ENCODE measurements at regions of chr12 and their contacts with region 1.

Region 1: GRCh38 chr12:67355578-67356379 is 86.6 kb downstream of the CAND1 start:
- DNase-seq: peak; percentile 37 to 55 (median 52)
- H3K4me3 ChIP-seq: no peak overlapping the region
- H3K4me3 Mint-ChIP-seq: peak overlapping the region in 4 of 8 donors; percentile 39 to 63 (median 48)
- H3K27ac ChIP-seq: no peak overlapping the region
- H3K27ac Mint-ChIP-seq: peak overlapping the region in 2 of 7 donors; percentile 3 to 27
- H3K4me1 ChIP-seq: peaks cover 12% of the 10 kb centered on the region
- H3K4me1 Mint-ChIP-seq: peaks cover 7 to 16% (median 10%) of the 10 kb centered on the region in 4 donors
- H3K27me3 ChIP-seq: no peaks in the 10 kb centered on the region
- H3K27me3 Mint-ChIP-seq: no peaks in the 10 kb centered on the region

Region 2: DNA sequence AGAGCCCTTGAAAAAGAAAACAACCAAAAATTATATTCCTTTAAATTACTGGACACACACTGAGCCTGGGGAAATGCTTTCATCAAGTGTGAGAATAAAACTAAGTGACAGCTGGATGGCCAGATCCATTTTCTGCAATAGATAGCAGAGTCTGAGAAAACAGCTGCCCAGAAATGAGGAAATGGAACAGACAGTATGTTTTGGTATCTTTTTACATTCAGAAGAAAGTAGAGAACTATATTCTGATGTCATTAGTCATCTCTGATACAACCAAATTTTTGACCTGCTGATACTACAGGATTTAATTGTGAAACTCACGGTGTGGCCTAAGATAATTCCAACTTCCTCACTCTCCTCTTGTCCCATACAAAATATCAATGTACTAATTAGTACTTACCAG is 1453.3 kb before region 1 on chr12:
- CTCF ChIA-PET with region 1: no interaction called
- POLR2A ChIA-PET with region 1: no interaction called
- intact Hi-C with region 1: no loop called
- DNase-seq: no peak
- H3K4me3 ChIP-seq: no peak overlapping the region
- H3K4me3 Mint-ChIP-seq: no peak overlapping the region
- H3K27ac ChIP-seq: no peak overlapping the region
- H3K27ac Mint-ChIP-seq: no peak overlapping the region
- H3K4me1 ChIP-seq: no peaks in the 10 kb centered on the region
- H3K4me1 Mint-ChIP-seq: no peaks in the 10 kb centered on the region
- H3K27me3 ChIP-seq: no peaks in the 10 kb centered on the region
- H3K27me3 Mint-ChIP-seq: peaks cover 7 to 16% of the 10 kb centered on the region in 2 donors

Region 3: GRCh38 chr12:67002720-67003119 is 353.1 kb before region 1 on chr12:
- CTCF ChIA-PET with region 1: no interaction called
- POLR2A ChIA-PET with region 1: no interaction called
- intact Hi-C with region 1: no loop called
- DNase-seq: no peak
- H3K4me3 ChIP-seq: no peak overlapping the region
- H3K4me3 Mint-ChIP-seq: no peak overlapping the region
- H3K27ac ChIP-seq: no peak overlapping the region
- H3K27ac Mint-ChIP-seq: no peak overlapping the region
- H3K4me1 ChIP-seq: no peaks in the 10 kb centered on the region
- H3K4me1 Mint-ChIP-seq: no peaks in the 10 kb centered on the region
- H3K27me3 ChIP-seq: no peaks in the 10 kb centered on the region
- H3K27me3 Mint-ChIP-seq: peaks cover 1 to 3% of the 10 kb centered on the region in 2 donors

Region 4: GRCh38 chr12:67222302-67222701 is 133.5 kb before region 1 on chr12:
- CTCF ChIA-PET with region 1: no interaction called
- POLR2A ChIA-PET with region 1: no interaction called
- intact Hi-C with region 1: no loop called
- DNase-seq: no peak
- H3K4me3 ChIP-seq: no peak overlapping the region
- H3K4me3 Mint-ChIP-seq: no peak overlapping the region
- H3K27ac ChIP-seq: no peak overlapping the region
- H3K27ac Mint-ChIP-seq: no peak overlapping the region
- H3K4me1 ChIP-seq: no peaks in the 10 kb centered on the region
- H3K4me1 Mint-ChIP-seq: no peaks in the 10 kb centered on the region
- H3K27me3 ChIP-seq: no peaks in the 10 kb centered on the region
- H3K27me3 Mint-ChIP-seq: peaks cover 0 to 3% of the 10 kb centered on the region in 2 donors

Region 5: GRCh38 chr12:67268896-67269631 is 86.7 kb before region 1 on chr12 and contains the start of gene CAND1:
- CTCF ChIA-PET with region 1: no interaction called
- POLR2A ChIA-PET with region 1: no interaction called
- intact Hi-C with region 1: no loop called
- DNase-seq: peak; percentile 98 to 99 (median 99)
- H3K4me3 ChIP-seq: peak within 1 kb of the TSS; percentile 81 to 84
- H3K4me3 Mint-ChIP-seq: peak within 1 kb of the TSS; percentile 92 to 99 (median 98)
- H3K27ac ChIP-seq: peak within 1 kb of the TSS; percentile 97
- H3K27ac Mint-ChIP-seq: peak within 1 kb of the TSS; percentile 95 to 100 (median 99)
- H3K4me1 ChIP-seq: peaks cover 45% of the 10 kb centered on the region
- H3K4me1 Mint-ChIP-seq: peaks cover 28 to 52% (median 39%) of the 10 kb centered on the region in 4 donors
- H3K27me3 ChIP-seq: no peaks in the 10 kb centered on the region
- H3K27me3 Mint-ChIP-seq: no peaks in the 10 kb centered on the region
- total RNA-seq, gene CAND1: 124 TPM

Region 6: DNA sequence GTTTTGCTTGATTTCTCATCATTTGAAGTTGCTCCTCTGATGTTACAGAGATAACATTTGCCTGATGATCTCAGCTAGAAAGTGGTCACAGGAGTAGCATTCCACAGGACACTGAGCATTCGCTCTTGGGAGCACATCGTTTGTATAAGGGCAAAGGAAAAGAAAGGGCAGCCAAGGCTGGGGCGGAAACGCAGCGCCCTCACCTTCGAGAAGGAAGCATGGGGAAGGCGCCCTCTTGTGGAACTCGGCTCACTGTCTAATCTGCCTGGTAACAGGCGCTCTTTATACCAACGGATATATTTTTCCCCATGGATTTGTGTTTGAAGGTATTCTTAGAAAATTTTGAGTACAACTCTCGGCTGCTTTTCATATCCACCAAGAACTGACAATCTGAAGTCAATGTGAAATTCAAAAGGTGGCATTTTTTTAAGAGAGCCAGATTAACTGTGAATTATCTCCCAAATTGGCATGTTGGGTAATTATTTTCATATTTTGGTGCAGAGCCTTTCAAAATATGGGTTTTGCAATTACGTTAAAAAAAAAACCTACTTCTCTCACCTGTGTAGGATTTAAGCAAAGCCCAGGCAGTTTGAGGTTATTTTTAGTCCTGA is 86.1 kb after region 1 on chr12:
- CTCF ChIA-PET with region 1: interaction called, 13 read pairs
- POLR2A ChIA-PET with region 1: interaction called, 3 read pairs
- intact Hi-C with region 1: loop called (anchors 2 kb)
- DNase-seq: peak; percentile 68 to 79 (median 68)
- H3K4me3 ChIP-seq: no peak overlapping the region
- H3K4me3 Mint-ChIP-seq: peak overlapping the region; percentile 43 to 72 (median 68)
- H3K27ac ChIP-seq: no peak overlapping the region
- H3K27ac Mint-ChIP-seq: peak overlapping the region in 6 of 7 donors; percentile 10 to 86 (median 82)
- H3K4me1 ChIP-seq: peaks cover 12% of the 10 kb centered on the region
- H3K4me1 Mint-ChIP-seq: peaks cover 21 to 35% (median 27%) of the 10 kb centered on the region in 4 donors
- H3K27me3 ChIP-seq: no peaks in the 10 kb centered on the region
- H3K27me3 Mint-ChIP-seq: no peaks in the 10 kb centered on the region

Region 7: GRCh38 chr12:67630373-67631088 is 274.8 kb after region 1 on chr12:
- CTCF ChIA-PET with region 1: interaction called, 15 read pairs
- POLR2A ChIA-PET with region 1: interaction called, 4 read pairs
- intact Hi-C with region 1: no loop called
- DNase-seq: peak; percentile 91 to 96 (median 92)
- H3K4me3 ChIP-seq: no peak overlapping the region
- H3K4me3 Mint-ChIP-seq: peak overlapping the region; percentile 61 to 88 (median 74)
- H3K27ac ChIP-seq: peak overlapping the region; percentile 43
- H3K27ac Mint-ChIP-seq: peak overlapping the region; percentile 87 to 96 (median 91)
- H3K4me1 ChIP-seq: peaks cover 84% of the 10 kb centered on the region
- H3K4me1 Mint-ChIP-seq: peaks cover 67 to 91% (median 82%) of the 10 kb centered on the region in 4 donors
- H3K27me3 ChIP-seq: no peaks in the 10 kb centered on the region
- H3K27me3 Mint-ChIP-seq: no peaks in the 10 kb centered on the region

Region 8: GRCh38 chr12:68040450-68041075 is 684.8 kb after region 1 on chr12:
- CTCF ChIA-PET with region 1: interaction called, 27 read pairs
- POLR2A ChIA-PET with region 1: no interaction called
- intact Hi-C with region 1: loop called (anchors 5 kb)
- DNase-seq: peak; percentile 60 to 69 (median 65)
- H3K4me3 ChIP-seq: no peak overlapping the region
- H3K4me3 Mint-ChIP-seq: peak overlapping the region in 4 of 8 donors; percentile 2 to 29 (median 16)
- H3K27ac ChIP-seq: no peak overlapping the region
- H3K27ac Mint-ChIP-seq: peak overlapping the region in 5 of 7 donors; percentile 2 to 82 (median 34)
- H3K4me1 ChIP-seq: peaks cover 12% of the 10 kb centered on the region
- H3K4me1 Mint-ChIP-seq: peaks cover 12 to 19% (median 16%) of the 10 kb centered on the region in 4 donors
- H3K27me3 ChIP-seq: no peaks in the 10 kb centered on the region
- H3K27me3 Mint-ChIP-seq: no peaks in the 10 kb centered on the region